Sigmoid colon (tissue), 7 donors: ENCODE measurements at regions of chr21 and their contacts with region 1.

Region 1: GRCh38 chr21:33324291-33325221 is at the start of gene IFNAR1:
- DNase-seq: peak; percentile 100
- H3K4me3 ChIP-seq: peak within 1 kb of the TSS; percentile 76 to 99 (median 88)
- H3K27ac ChIP-seq: peak within 1 kb of the TSS; percentile 94 to 98 (median 98)
- H3K4me1 ChIP-seq: peaks cover 0 to 28% (median 19%) of the 10 kb centered on the region in 4 donors
- H3K27me3 ChIP-seq: no peaks in the 10 kb centered on the region
- CTCF ChIP-seq: no peak
- EP300 ChIP-seq: no peak
- POLR2A ChIP-seq: peak; percentile 79 to 90
- total RNA-seq, gene IFNAR1: 23.5 to 32.6 (median 25.5) TPM

Region 2: DNA sequence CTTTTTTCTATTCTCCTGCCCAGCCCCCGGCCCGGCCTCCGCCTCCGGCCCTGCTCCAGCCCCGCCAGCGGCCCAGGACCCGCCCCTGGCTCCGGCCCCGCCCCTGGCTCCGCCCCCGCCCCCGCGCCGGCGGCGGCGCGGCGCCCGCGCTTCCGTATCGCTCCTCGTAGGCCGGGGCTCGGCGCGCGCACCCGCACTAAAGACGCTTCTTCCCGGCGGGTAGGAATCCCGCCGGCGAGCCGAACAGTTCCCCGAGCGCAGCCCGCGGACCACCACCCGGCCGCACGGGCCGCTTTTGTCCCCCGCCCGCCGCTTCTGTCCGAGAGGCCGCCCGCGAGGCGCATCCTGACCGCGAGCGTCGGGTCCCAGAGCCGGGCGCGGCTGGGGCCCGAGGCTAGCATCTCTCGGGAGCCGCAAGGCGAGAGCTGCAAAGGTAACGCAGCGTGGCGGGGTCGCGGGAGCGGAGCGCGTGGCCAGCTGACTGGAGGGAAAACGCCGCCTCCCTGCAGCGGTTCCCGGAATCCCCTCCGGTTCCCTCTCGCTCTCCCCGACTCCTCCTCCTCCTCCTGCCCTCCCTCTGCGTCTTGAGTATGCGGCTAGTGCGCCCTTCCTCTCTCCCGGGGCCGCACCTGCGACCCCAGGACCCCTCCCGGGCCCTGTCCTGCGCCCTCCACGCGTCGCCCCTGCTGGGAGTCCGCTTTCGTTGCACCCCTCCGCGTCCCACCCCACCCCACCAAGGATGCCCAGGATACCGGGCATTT is 94.6 kb before region 1 on chr21 and contains the start of gene IFNAR2:
- intact Hi-C with region 1: loop called (anchors 2 kb)
- DNase-seq: peak; percentile 78
- H3K4me3 ChIP-seq: peak within 1 kb of the TSS; percentile 86 to 100 (median 96)
- H3K27ac ChIP-seq: peak within 1 kb of the TSS; percentile 96 to 98 (median 98)
- H3K4me1 ChIP-seq: peaks cover 0 to 22% (median 14%) of the 10 kb centered on the region in 4 donors
- H3K27me3 ChIP-seq: no peaks in the 10 kb centered on the region
- CTCF ChIP-seq: no peak
- EP300 ChIP-seq: no peak
- POLR2A ChIP-seq: peak in 1 of 2 donors; percentile 48
- total RNA-seq, gene IFNAR2: 7.6 to 19.0 (median 12.2) TPM

Region 3: GRCh38 chr21:33266050-33266788 is 58.3 kb before region 1 on chr21 and contains the start of gene IL10RB:
- intact Hi-C with region 1: loop called (anchors 2 kb)
- DNase-seq: peak; percentile 80
- H3K4me3 ChIP-seq: peak within 1 kb of the TSS; percentile 76 to 90 (median 78)
- H3K27ac ChIP-seq: peak within 1 kb of the TSS; percentile 80 to 88 (median 86)
- H3K4me1 ChIP-seq: peaks cover 0 to 18% (median 14%) of the 10 kb centered on the region in 4 donors
- H3K27me3 ChIP-seq: no peaks in the 10 kb centered on the region
- CTCF ChIP-seq: no peak
- EP300 ChIP-seq: no peak
- POLR2A ChIP-seq: no peak
- total RNA-seq, gene IL10RB: 15.0 to 26.2 (median 23.6) TPM

Region 4: GRCh38 chr21:33403779-33404585 is 79.4 kb after region 1 on chr21:
- intact Hi-C with region 1: loop called (anchors 2 kb)
- DNase-seq: peak; percentile 83
- H3K4me3 ChIP-seq: peak overlapping the region; percentile 61 to 85 (median 78)
- H3K27ac ChIP-seq: peak overlapping the region; percentile 84 to 94 (median 90)
- H3K4me1 ChIP-seq: peaks cover 0 to 40% (median 30%) of the 10 kb centered on the region in 4 donors
- H3K27me3 ChIP-seq: no peaks in the 10 kb centered on the region
- CTCF ChIP-seq: no peak
- EP300 ChIP-seq: no peak
- POLR2A ChIP-seq: peak; percentile 17 to 22

Region 5: GRCh38 chr21:33441489-33442477 is 117.2 kb after region 1 on chr21:
- intact Hi-C with region 1: loop called (anchors 10 kb)
- DNase-seq: no peak
- H3K4me3 ChIP-seq: no peak overlapping the region
- H3K27ac ChIP-seq: peak overlapping the region in 3 of 4 donors; percentile 39 to 47 (median 45)
- H3K4me1 ChIP-seq: peaks cover 0 to 15% (median 7%) of the 10 kb centered on the region in 4 donors
- H3K27me3 ChIP-seq: no peaks in the 10 kb centered on the region
- CTCF ChIP-seq: no peak
- EP300 ChIP-seq: no peak
- POLR2A ChIP-seq: no peak